K562 (cell line): ENCODE measurements at regions of chr10 and their contacts with region 1.

Region 1: DNA sequence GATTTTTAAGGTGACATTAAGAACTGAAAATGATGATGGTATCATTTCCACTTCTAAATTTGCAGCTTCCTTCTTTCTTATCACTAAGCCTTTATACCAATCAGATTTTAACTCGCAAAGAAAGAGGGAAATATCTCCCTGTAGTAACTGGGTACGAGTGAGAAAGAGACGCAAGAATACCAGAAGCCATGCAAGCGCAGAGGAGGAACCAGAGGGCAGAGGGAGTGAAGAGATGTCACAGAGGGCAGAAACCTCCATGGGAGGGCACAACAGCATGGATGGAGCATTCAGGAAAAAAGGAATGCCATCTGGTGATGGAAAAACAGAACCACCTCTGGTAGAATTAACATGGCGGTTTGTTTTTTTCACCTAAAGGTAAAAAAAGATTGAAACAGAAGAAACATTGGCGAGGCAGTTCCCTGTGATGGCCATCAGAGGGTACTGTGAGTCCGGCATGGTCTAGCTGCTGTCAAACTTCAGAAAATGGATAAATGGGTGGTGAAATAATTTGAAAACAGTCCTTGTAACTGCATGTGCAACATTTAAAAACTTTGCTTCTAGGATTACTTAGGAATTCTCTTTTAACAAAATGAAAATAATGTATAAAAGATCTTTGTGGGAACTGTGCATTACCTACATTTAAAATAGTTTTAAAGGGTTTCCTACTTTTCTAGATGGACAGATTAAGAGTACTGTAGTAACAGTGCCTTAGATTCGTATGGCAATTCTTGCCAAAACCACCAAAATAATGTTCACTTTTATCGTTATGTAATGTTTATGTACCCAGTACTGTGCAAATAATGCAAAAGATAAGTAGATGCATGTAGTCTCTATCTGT is 91.8 kb downstream of the ARHGAP12 start:
- DNase-seq: peak; percentile 25 to 57 (median 32)
- ATAC-seq: peak; percentile 93
- H3K4me3 ChIP-seq: no peak overlapping the region
- H3K27ac ChIP-seq: no peak overlapping the region
- H3K4me1 ChIP-seq: no peaks in the 10 kb centered on the region
- H3K27me3 ChIP-seq: no peaks in the 10 kb centered on the region
- CTCF ChIP-seq: peak; percentile 61 to 83 (median 77)
- EP300 ChIP-seq: no peak
- POLR2A ChIP-seq: no peak
- RAD21 ChIP-seq: peak; percentile 52 to 78

Region 2: DNA sequence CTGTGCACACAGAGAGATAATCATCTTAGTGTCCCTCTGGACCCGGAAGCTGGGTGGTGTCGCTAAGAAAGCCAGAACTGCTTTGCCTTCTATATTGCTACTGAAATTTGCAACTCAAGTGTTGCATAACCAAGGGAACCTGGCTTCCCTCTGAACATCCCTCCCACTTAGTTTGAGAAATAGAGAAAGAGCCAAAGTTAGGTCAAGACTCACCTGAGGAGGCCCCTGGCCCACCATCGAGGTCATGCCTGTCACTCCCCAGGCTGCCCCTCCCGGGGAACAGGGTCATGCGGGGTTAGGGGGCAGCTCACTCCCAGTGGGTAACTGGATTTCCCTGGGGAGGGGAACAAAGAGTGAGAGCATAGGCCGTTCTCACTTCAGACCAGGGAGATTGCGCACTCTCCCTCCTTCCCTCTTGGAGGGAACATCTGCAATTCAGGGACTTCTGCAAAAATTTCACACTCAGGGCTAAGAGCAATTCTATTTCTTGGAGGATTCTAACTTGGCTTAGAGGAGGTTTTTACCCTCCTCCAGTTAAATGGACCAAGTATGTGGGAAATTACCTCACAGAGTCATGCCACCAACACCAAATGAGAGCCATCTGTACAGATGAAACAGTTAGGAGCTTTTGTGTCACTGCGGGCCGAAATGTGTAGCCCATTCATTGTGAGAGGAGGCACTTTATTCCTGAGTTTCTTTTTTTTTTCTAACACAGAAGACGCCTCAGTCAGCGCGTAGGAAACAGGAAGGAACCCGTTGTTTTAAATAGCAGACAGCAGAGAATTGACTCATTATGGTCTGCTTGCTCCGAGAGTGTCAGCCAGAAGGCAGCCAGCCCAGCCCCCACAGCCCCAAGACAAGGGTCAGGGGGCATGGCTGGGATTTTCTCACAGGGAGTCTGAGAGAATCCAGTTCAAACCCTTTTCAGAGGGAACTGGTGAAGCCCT is 129.4 kb before region 1 on chr10:
- CTCF ChIA-PET with region 1: no interaction called
- POLR2A ChIA-PET with region 1: no interaction called
- in situ Hi-C with region 1: no loop called
- intact Hi-C with region 1: no loop called
- DNase-seq: no peak
- ATAC-seq: no peak
- H3K4me3 ChIP-seq: no peak overlapping the region
- H3K27ac ChIP-seq: no peak overlapping the region
- H3K4me1 ChIP-seq: no peaks in the 10 kb centered on the region
- H3K27me3 ChIP-seq: no peaks in the 10 kb centered on the region
- CTCF ChIP-seq: no peak
- EP300 ChIP-seq: no peak
- POLR2A ChIP-seq: no peak
- RAD21 ChIP-seq: no peak

Region 3: DNA sequence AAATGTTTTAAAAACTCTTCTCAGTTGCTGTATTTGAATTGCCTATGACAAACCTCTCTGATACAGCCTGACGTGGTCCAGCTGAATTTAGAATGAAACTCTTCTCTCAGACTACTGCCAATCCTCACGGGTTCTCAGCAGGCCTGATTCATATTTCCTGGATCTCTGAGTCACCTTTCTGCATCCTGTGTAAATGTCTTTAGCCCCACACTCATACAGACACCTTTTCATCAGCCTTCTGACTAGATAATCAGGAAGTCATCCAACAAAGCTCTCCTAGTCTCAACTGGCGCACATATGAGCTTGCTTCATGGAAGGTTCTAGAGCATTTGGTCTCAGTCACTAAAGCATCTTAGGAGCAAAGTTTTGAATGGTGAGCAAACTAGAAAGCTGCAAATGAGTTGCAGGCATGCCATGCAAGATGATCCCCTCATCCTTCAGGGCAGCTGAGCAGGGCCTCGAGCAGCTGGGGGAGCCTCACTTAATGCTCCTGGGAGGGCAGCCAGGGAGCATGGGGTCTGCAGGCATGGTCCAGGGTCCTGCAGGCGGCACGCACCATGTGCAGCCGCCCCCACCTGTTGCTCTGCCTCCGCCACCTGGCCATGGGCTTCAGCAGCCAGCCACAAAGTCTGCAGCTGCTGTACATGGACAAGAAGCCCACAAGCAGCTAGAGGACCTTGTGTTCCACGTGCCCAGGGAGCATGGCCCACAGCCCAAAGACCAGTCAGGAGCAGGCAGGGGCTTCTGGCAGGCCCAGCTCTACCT is 91.0 kb before region 1 on chr10:
- CTCF ChIA-PET with region 1: no interaction called
- POLR2A ChIA-PET with region 1: no interaction called
- in situ Hi-C with region 1: no loop called
- intact Hi-C with region 1: no loop called
- DNase-seq: no peak
- ATAC-seq: no peak
- H3K4me3 ChIP-seq: no peak overlapping the region
- H3K27ac ChIP-seq: no peak overlapping the region
- H3K4me1 ChIP-seq: peaks cover 0 to 8% of the 10 kb centered on the region in 2 experiments; a peak in 1 of 5 replicates
- H3K27me3 ChIP-seq: peaks cover 16 to 25% of the 10 kb centered on the region in 2 experiments; a peak in 3 of 5 replicates
- CTCF ChIP-seq: no peak
- EP300 ChIP-seq: no peak
- POLR2A ChIP-seq: no peak
- RAD21 ChIP-seq: no peak

Region 4: GRCh38 chr10:32210306-32211045 is 373.7 kb after region 1 on chr10:
- CTCF ChIA-PET with region 1: interaction called, 4 read pairs
- POLR2A ChIA-PET with region 1: no interaction called
- in situ Hi-C with region 1: no loop called
- intact Hi-C with region 1: loop called (anchors 5 kb)
- DNase-seq: peak; percentile 17 to 59 (median 38)
- ATAC-seq: peak; percentile 87
- H3K4me3 ChIP-seq: no peak overlapping the region
- H3K27ac ChIP-seq: no peak overlapping the region
- H3K4me1 ChIP-seq: no peaks in the 10 kb centered on the region; a peak in 1 of 5 replicates
- H3K27me3 ChIP-seq: no peaks in the 10 kb centered on the region
- CTCF ChIP-seq: peak; percentile 49 to 89 (median 74)
- EP300 ChIP-seq: no peak
- POLR2A ChIP-seq: no peak
- RAD21 ChIP-seq: peak; percentile 49 to 59